HCT116 (cell line): ENCODE measurements at regions of chr2 and their contacts with region 1.

Region 1: GRCh38 chr2:26577434-26578112 is 63.6 kb downstream of the CIB4 start:
- DNase-seq: peak; percentile 27
- ATAC-seq: peak; percentile 94
- H3K4me3 ChIP-seq: no peak overlapping the region
- H3K27ac ChIP-seq: no peak overlapping the region
- H3K4me1 ChIP-seq: peaks cover 0 to 11% of the 10 kb centered on the region in 2 experiments; a peak in 1 of 4 replicates
- H3K27me3 ChIP-seq: no peaks in the 10 kb centered on the region
- CTCF ChIP-seq: peak; percentile 90 to 96 (median 96)
- POLR2A ChIP-seq: no peak
- RAD21 ChIP-seq: peak; percentile 98

Region 2: GRCh38 chr2:25951071-25951547 is 626.5 kb before region 1 on chr2:
- CTCF ChIA-PET with region 1: interaction called, 4 read pairs
- POLR2A ChIA-PET with region 1: no interaction called
- RAD21 ChIA-PET with region 1: no interaction called
- intact Hi-C with region 1: loop called (anchors 10 kb)
- DNase-seq: peak; percentile 88
- ATAC-seq: peak; percentile 97
- H3K4me3 ChIP-seq: peak overlapping the region in 1 of 2 experiments; percentile 10; a peak in 2 of 4 replicates
- H3K27ac ChIP-seq: no peak overlapping the region
- H3K4me1 ChIP-seq: peaks cover 0 to 12% of the 10 kb centered on the region in 2 experiments; a peak in 1 of 4 replicates
- H3K27me3 ChIP-seq: no peaks in the 10 kb centered on the region
- CTCF ChIP-seq: peak; percentile 89 to 97 (median 93)
- POLR2A ChIP-seq: no peak
- RAD21 ChIP-seq: peak; percentile 100

Region 3: GRCh38 chr2:26235085-26235484 is 342.5 kb before region 1 on chr2:
- CTCF ChIA-PET with region 1: no interaction called
- POLR2A ChIA-PET with region 1: no interaction called
- RAD21 ChIA-PET with region 1: no interaction called
- intact Hi-C with region 1: loop called (anchors 10 kb)
- DNase-seq: no peak
- ATAC-seq: peak; percentile 49; the same call in 1 of the 2 replicates
- H3K4me3 ChIP-seq: no peak overlapping the region
- H3K27ac ChIP-seq: no peak overlapping the region
- H3K4me1 ChIP-seq: no peaks in the 10 kb centered on the region
- H3K27me3 ChIP-seq: no peaks in the 10 kb centered on the region
- CTCF ChIP-seq: peak; percentile 29 to 40 (median 39); a peak in 5 of 6 replicates
- POLR2A ChIP-seq: no peak
- RAD21 ChIP-seq: peak; percentile 65

Region 4: DNA sequence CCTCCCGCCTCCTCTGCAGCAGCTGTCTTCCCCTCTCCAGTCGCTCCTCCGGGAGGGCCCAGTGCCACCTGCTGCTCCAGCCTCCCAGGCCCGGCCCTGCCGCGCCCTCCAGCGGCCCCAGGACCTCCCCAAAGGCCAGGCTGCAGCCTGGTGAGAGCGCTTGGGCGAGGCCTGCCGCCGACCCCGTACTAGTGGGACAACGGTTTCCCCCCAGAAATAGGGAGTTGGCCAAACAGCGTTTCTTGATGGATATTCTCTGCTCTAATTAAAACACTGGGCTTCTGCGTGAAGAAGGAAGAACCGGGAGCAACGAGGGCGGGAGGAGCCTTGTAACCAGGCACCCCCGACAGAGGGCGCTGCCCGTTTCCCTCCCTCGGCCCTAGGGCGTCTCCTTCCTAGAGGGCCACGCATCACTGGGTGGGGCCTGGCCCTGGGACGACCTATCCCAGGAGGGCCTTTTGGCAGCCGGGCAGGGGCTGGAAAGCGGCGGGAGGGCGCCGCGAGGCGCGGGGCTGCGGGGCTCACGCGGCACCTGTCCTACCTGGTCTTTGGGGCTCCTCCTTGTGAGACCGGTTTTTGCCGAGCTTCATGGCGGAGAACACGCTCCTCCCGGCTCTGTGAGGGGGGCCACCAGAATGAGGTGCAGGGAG is 74.2 kb before region 1 on chr2:
- CTCF ChIA-PET with region 1: interaction called, 14 read pairs
- POLR2A ChIA-PET with region 1: no interaction called
- RAD21 ChIA-PET with region 1: interaction called in 1 of 2 experiments, 3 read pairs
- intact Hi-C with region 1: loop called (anchors 1 kb)
- DNase-seq: peak; percentile 73
- ATAC-seq: peak; percentile 99
- H3K4me3 ChIP-seq: peak overlapping the region; percentile 41 to 60
- H3K27ac ChIP-seq: peak overlapping the region; percentile 7; the same call in 1 of the 2 replicates
- H3K4me1 ChIP-seq: peaks cover 3 to 15% of the 10 kb centered on the region in 2 experiments; a peak in 3 of 4 replicates
- H3K27me3 ChIP-seq: no peaks in the 10 kb centered on the region; the same call in 1 of the 2 replicates
- CTCF ChIP-seq: peak; percentile 95 to 99 (median 98)
- POLR2A ChIP-seq: no peak
- RAD21 ChIP-seq: peak; percentile 68

Region 5: DNA sequence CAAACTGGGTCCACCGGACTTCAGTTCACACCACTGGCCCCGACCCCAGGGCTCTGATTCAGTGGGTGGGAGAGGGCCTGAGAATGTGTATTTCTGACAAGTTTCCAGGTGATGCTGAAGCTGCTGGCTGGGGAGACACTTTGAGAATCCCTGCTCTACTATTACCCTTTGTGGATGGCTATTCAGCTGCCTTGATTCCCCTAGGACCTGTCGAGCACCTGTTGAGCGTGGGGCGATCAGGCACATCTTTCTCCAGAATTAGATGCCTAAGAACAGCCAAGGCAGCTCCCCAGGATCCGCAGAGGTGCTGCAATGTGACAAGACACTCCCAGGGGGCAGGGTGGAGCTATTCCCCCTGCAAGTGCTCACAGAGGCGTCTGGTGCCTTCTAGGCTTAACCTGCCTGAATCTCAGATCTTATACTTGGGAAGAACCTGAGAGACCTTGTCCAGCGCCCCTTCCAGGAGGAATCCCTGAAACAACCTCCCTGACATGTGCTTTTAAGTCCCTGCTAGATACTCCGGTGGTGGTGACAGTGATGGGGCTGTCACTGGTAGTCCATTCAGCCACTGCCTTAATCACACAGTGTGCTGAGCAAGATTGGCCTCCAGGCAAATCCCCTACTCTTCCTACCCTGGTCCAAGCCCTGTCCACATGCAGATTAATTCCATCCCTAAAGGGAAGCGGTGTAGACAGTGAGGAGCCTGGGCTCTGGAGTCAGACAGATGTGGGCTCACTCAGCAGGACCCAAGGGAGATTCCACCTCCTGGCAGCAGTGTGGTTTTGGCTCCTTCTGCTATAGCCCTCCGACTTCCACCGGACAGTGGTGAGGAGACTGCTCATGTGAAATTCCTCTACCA is 56.3 kb before region 1 on chr2:
- CTCF ChIA-PET with region 1: interaction called, 30 read pairs
- POLR2A ChIA-PET with region 1: interaction called, 4 read pairs
- RAD21 ChIA-PET with region 1: interaction called, 5 to 13 read pairs
- intact Hi-C with region 1: loop called (anchors 1 kb)
- DNase-seq: peak; percentile 38
- ATAC-seq: peak; percentile 96
- H3K4me3 ChIP-seq: no peak overlapping the region
- H3K27ac ChIP-seq: no peak overlapping the region
- H3K4me1 ChIP-seq: no peaks in the 10 kb centered on the region
- H3K27me3 ChIP-seq: peaks cover 18% of the 10 kb centered on the region; the same call in 1 of the 2 replicates
- CTCF ChIP-seq: peak; percentile 69 to 75 (median 75)
- POLR2A ChIP-seq: no peak
- RAD21 ChIP-seq: peak; percentile 77

Region 6: GRCh38 chr2:26561918-26562810 is 15.4 kb before region 1 on chr2:
- CTCF ChIA-PET with region 1: interaction called, 10 read pairs
- POLR2A ChIA-PET with region 1: no interaction called
- RAD21 ChIA-PET with region 1: interaction called in 1 of 2 experiments, 3 read pairs
- intact Hi-C with region 1: no loop called
- DNase-seq: peak; percentile 45
- ATAC-seq: peak; percentile 85
- H3K4me3 ChIP-seq: peak overlapping the region; percentile 59 to 65
- H3K27ac ChIP-seq: peak overlapping the region; percentile 44
- H3K4me1 ChIP-seq: peaks cover 20 to 27% of the 10 kb centered on the region in 2 experiments
- H3K27me3 ChIP-seq: no peaks in the 10 kb centered on the region
- CTCF ChIP-seq: peak; percentile 25 to 51 (median 46); a peak in 3 of 6 replicates
- POLR2A ChIP-seq: no peak
- RAD21 ChIP-seq: peak; percentile 39